WTC11 (cell line): ENCODE measurements at regions of chrX and their contacts with region 1.

Region 1: GRCh38 chrX:44872817-44873414 is at the start of gene KDM6A:
- DNase-seq: peak; percentile 95
- ATAC-seq: peak; percentile 96
- H3K4me3 Mint-ChIP-seq: peak within 1 kb of the TSS; percentile 91
- H3K27ac Mint-ChIP-seq: peak within 1 kb of the TSS; percentile 97
- H3K4me1 Mint-ChIP-seq: peaks cover 12% of the 10 kb centered on the region
- H3K27me3 Mint-ChIP-seq: no peaks in the 10 kb centered on the region
- CTCF ChIP-seq: no peak
- total RNA-seq, gene KDM6A: 45.0 to 52.0 TPM (median 48.3 TPM) in 3 replicates

Region 2: DNA sequence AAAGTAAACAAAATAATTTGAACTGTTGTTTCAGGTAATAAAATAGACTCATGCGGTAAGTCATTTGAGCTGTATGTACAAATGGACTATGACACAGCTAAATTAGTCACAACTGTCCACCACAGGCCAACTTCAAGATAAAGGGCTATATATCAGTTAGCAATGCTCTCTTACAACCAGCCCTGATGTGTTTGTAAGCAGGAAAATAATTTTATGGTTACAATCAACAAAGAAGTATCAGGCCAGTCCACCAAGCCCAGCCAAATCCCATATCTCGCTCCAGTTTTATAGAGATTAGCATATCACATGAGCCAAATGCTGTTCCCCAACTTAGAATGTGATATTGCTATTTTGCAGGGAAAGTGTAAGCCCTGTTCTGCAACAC is 29.6 kb before region 1 on chrX:
- CTCF ChIA-PET with region 1: no interaction called
- POLR2A ChIA-PET with region 1: interaction called, 11 read pairs
- DNase-seq: no peak
- ATAC-seq: no peak
- H3K4me3 Mint-ChIP-seq: no peak overlapping the region
- H3K27ac Mint-ChIP-seq: no peak overlapping the region
- H3K4me1 Mint-ChIP-seq: no peaks in the 10 kb centered on the region
- H3K27me3 Mint-ChIP-seq: no peaks in the 10 kb centered on the region
- CTCF ChIP-seq: no peak

Region 3: DNA sequence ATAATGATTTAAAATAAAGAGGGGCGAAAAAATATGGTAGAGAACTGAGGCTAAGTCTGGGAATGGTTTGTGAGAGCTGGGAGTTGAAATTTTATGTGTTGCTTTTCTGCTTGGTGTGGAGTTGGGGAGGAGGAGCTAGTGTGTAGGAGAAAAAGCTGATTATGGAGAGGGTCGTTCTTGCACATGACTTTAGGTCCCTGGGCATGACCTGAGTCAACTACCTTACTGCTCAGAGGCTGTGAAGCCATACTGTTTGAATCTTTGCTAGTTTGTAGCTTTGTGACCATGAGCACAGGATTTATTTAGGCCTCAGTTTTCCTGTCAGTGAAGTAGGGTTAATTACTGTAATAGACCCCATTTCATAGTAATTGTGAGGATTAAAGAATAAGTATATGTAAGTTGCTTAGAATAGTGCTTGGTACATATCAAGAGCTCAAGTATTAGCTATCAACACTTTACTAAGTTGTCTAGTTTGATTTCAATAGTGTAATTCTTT is 78.7 kb after region 1 on chrX:
- CTCF ChIA-PET with region 1: interaction called, 5 read pairs
- POLR2A ChIA-PET with region 1: interaction called, 20 read pairs
- DNase-seq: no peak
- ATAC-seq: no peak
- H3K4me3 Mint-ChIP-seq: peak overlapping the region; percentile 85
- H3K27ac Mint-ChIP-seq: peak overlapping the region; percentile 99
- H3K4me1 Mint-ChIP-seq: peaks cover 55% of the 10 kb centered on the region
- H3K27me3 Mint-ChIP-seq: no peaks in the 10 kb centered on the region
- CTCF ChIP-seq: no peak